WTC11 (cell line): ENCODE measurements at regions of chr14 and their contacts with region 1.

Region 1: GRCh38 chr14:92951912-92952471 is 29.0 kb downstream of the CHGA start:
- DNase-seq: peak; percentile 84
- ATAC-seq: peak; percentile 91
- H3K4me3 Mint-ChIP-seq: no peak overlapping the region
- H3K27ac Mint-ChIP-seq: peak overlapping the region; percentile 39; the same call in 1 of the 2 replicates
- H3K4me1 Mint-ChIP-seq: peaks cover 11% of the 10 kb centered on the region
- H3K27me3 Mint-ChIP-seq: no peaks in the 10 kb centered on the region
- CTCF ChIP-seq: peak; percentile 97

Region 2: DNA sequence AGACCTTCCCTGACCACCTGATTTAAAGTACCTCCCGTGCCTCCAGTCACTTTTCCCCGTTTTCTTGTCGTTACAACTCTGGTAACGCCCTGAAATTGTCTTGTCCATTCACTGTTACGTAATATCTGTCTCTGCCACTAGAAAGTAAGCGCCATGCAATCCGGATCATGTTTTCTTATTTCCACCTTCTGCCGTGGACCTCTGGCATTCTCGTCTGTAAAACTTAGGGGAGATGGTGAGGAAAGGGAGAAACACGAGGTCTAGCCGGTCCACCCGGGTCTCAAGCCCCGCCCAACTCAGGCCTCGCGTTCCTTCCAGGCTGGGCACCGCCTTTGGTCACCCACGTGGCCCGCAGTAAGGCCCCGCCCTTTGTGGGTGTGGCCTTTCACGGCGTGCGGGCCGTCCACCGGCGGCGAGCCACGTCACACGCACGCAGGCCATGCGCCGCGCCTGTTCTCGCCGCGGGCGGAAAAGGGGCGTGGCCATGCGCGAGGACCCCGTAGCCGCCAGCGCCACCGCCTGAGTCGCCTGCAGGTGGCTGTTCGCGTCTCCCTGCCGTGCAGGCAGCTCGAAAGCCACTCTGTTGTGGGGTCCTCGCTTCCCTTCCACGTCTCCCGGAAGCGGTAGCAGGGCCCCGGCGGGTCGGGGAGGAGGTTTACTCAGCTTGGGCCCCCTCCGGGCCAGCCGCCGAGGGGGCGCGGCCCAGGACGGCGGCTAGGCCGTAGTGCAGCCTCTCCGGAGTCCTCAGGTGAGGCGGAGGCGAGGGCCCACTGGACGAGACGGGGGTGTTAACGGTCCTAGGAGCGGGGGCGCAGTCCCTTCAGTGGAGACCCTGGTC is 158.1 kb before region 1 on chr14 and contains the start of gene GOLGA5:
- CTCF ChIA-PET with region 1: no interaction called
- POLR2A ChIA-PET with region 1: no interaction called
- DNase-seq: peak; percentile 96
- ATAC-seq: peak; percentile 97
- H3K4me3 Mint-ChIP-seq: peak within 1 kb of the TSS; percentile 97
- H3K27ac Mint-ChIP-seq: peak within 1 kb of the TSS; percentile 97
- H3K4me1 Mint-ChIP-seq: peaks cover 23% of the 10 kb centered on the region
- H3K27me3 Mint-ChIP-seq: peaks cover 16% of the 10 kb centered on the region
- CTCF ChIP-seq: no peak
- total RNA-seq, gene GOLGA5: 23.8 to 27.0 TPM (median 25.0 TPM) in 3 replicates

Region 3: GRCh38 chr14:92866181-92866752 is 85.7 kb before region 1 on chr14:
- CTCF ChIA-PET with region 1: no interaction called
- POLR2A ChIA-PET with region 1: no interaction called
- DNase-seq: no peak
- ATAC-seq: no peak
- H3K4me3 Mint-ChIP-seq: no peak overlapping the region
- H3K27ac Mint-ChIP-seq: no peak overlapping the region
- H3K4me1 Mint-ChIP-seq: no peaks in the 10 kb centered on the region
- H3K27me3 Mint-ChIP-seq: no peaks in the 10 kb centered on the region
- CTCF ChIP-seq: no peak

Region 4: GRCh38 chr14:92963301-92964123 is 11.5 kb after region 1 on chr14:
- CTCF ChIA-PET with region 1: interaction called, 14 read pairs
- POLR2A ChIA-PET with region 1: no interaction called
- DNase-seq: no peak
- ATAC-seq: peak; percentile 56
- H3K4me3 Mint-ChIP-seq: no peak overlapping the region
- H3K27ac Mint-ChIP-seq: peak overlapping the region; percentile 82
- H3K4me1 Mint-ChIP-seq: peaks cover 23% of the 10 kb centered on the region
- H3K27me3 Mint-ChIP-seq: no peaks in the 10 kb centered on the region
- CTCF ChIP-seq: no peak

Region 5: DNA sequence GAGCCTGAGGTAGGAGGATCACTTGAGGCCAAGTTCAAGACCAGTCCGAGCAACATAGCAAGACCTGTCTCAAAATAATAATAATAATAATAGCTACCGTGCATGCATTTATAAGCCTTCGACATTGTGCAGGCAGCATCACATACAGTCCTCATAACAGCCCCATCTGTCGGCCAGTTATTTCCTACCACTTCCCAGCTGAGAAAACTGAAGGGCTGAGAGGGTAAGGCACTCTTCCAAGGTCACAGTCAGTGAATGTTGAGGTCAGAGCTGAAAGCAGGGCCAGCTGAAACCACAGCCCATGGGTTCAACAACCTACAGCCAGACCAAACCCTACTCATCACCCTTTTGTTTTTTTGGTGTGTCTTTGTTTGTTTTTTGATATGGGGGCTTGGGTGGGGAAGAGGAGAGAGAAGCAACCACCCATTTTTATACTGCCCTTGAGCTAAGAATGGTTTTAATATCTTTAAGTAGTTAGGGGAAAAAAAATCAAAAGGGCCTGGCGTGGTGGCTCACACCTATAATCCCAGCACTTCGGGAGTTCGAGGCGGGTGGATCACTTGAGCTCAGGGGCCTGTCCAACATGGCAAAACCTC is 180.6 kb after region 1 on chr14:
- CTCF ChIA-PET with region 1: interaction called, 37 read pairs
- POLR2A ChIA-PET with region 1: no interaction called
- DNase-seq: no peak
- ATAC-seq: peak; percentile 91
- H3K4me3 Mint-ChIP-seq: no peak overlapping the region
- H3K27ac Mint-ChIP-seq: peak overlapping the region; percentile 93
- H3K4me1 Mint-ChIP-seq: peaks cover 2% of the 10 kb centered on the region; the same call in 1 of the 2 replicates
- H3K27me3 Mint-ChIP-seq: no peaks in the 10 kb centered on the region
- CTCF ChIP-seq: no peak

Region 6: DNA sequence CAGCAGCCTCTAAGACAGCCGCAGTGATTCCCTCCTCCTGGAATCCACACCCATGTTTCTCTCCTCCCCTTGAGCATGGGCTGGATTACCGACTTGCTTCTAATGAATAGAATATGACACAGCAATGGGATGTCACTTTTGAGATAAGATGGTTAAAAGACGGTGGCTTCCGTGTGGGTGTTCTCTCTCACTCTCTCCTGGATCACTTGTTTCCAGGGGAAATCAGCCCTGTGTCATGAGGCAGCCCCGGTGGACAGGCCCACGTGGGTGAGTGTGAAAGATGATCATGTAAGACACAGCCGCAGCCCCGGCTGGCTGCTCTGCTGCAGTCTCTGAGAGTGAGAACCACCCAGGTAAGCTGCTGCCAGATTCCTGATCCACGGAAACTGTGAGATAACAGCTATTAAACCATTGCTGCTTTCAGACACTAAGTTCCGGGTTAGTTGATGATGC is 222.0 kb after region 1 on chr14:
- CTCF ChIA-PET with region 1: interaction called, 23 read pairs
- POLR2A ChIA-PET with region 1: no interaction called
- DNase-seq: no peak
- ATAC-seq: no peak
- H3K4me3 Mint-ChIP-seq: no peak overlapping the region
- H3K27ac Mint-ChIP-seq: no peak overlapping the region
- H3K4me1 Mint-ChIP-seq: no peaks in the 10 kb centered on the region
- H3K27me3 Mint-ChIP-seq: no peaks in the 10 kb centered on the region
- CTCF ChIP-seq: no peak